Heart left ventricle (tissue), 16 donors: ENCODE measurements at regions of chr16 and their contacts with region 1.

Region 1: DNA sequence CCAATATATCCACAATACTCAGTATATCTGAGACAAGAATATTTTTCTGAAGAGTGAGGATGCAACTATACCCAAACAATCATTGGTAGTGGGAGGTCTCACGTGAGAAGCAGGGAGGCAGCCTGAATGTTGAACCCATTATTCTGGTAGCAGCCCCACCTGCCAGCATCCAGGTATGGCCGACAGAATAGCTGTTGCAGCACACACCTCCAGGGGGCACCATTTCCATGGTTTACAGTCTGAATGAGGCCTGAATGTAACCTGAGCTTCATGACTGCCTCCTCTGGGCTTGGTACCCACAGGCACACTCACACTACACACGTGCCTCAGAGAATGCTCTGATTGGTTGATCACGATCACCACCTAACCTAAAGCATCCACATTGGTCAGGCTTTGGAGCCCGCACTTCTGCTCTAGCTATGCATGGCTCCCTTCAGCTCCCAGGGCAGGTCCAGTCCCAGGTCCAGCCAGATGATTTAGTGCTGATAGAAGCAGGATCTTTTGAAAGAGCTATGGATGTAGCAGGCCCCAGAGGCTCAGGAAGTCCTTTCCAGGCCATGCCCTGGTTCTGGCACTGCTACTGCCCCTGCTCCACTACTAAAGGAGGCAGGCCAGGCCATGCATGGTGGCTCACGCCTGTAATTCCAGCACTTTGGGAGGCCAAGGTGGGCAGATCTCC is 11.0 kb upstream of the CBFB start:
- DNase-seq: peak in 2 of 5 donors; percentile 45 to 47
- ATAC-seq: peak; percentile 14 to 41 (median 35)
- H3K4me3 ChIP-seq: no peak overlapping the region
- H3K27ac ChIP-seq: no peak overlapping the region
- H3K4me1 ChIP-seq: peaks cover 0 to 22% (median 18%) of the 10 kb centered on the region in 12 donors
- H3K27me3 ChIP-seq: peaks cover 0 to 20% (median 0%) of the 10 kb centered on the region in 9 donors
- CTCF ChIP-seq: peak in 11 of 12 donors; percentile 27 to 59 (median 50)
- POLR2A ChIP-seq: no peak

Region 2: DNA sequence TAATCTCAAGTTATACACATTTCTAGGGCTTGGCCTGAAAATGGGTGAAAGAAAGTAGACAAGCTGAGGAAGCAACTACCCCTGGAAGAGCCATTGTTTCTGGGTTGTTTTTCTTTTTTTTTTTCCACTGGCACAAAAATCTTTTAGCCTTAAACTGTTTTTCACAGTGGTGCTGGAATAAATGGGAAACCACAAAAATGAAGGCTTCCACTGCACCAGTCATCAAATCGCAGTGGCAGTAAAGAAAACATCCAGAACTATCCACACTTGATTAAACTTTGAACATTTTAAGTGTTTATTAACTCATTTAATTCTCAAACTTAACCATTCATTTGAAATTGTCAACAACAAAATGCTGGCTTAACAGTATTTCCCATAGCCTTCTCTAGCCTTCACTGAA is 335.7 kb before region 1 on chr16:
- intact Hi-C with region 1: no loop called
- DNase-seq: no peak
- ATAC-seq: no peak
- H3K4me3 ChIP-seq: no peak overlapping the region
- H3K27ac ChIP-seq: peak overlapping the region in 1 of 12 donors; percentile 5
- H3K4me1 ChIP-seq: peaks cover 0 to 10% (median 0%) of the 10 kb centered on the region in 12 donors
- H3K27me3 ChIP-seq: no peaks in the 10 kb centered on the region
- CTCF ChIP-seq: no peak
- POLR2A ChIP-seq: no peak

Region 3: GRCh38 chr16:66970775-66971725 is 46.9 kb before region 1 on chr16:
- intact Hi-C with region 1: no loop called
- DNase-seq: no peak
- ATAC-seq: no peak
- H3K4me3 ChIP-seq: no peak overlapping the region
- H3K27ac ChIP-seq: no peak overlapping the region
- H3K4me1 ChIP-seq: no peaks in the 10 kb centered on the region
- H3K27me3 ChIP-seq: no peaks in the 10 kb centered on the region
- CTCF ChIP-seq: no peak
- POLR2A ChIP-seq: no peak

Region 4: GRCh38 chr16:67159593-67160406 is 141.9 kb after region 1 on chr16 and contains the starts of genes FBXL8 and TRADD:
- intact Hi-C with region 1: loop called in 3 of 10 experiments (anchors 5 to 10 kb)
- DNase-seq: peak; percentile 75 to 88 (median 82)
- ATAC-seq: peak; percentile 23 to 75 (median 71)
- H3K4me3 ChIP-seq: peak within 1 kb of the TSS; percentile 75 to 98 (median 97)
- H3K27ac ChIP-seq: peak within 1 kb of the TSS; percentile 36 to 94 (median 83)
- H3K4me1 ChIP-seq: peaks cover 0 to 68% (median 58%) of the 10 kb centered on the region in 12 donors
- H3K27me3 ChIP-seq: peaks cover 0 to 32% (median 2%) of the 10 kb centered on the region in 9 donors
- CTCF ChIP-seq: peak in 11 of 12 donors; percentile 7 to 59 (median 38)
- POLR2A ChIP-seq: peak in 1 of 2 donors; percentile 76
- total RNA-seq, gene FBXL8: 5.0 to 13.4 (median 7.2) TPM
- total RNA-seq, gene TRADD: 4.7 to 14.3 (median 8.4) TPM